BJ (cell line): ENCODE measurements at regions of chr6 and their contacts with region 1.

Region 1: DNA sequence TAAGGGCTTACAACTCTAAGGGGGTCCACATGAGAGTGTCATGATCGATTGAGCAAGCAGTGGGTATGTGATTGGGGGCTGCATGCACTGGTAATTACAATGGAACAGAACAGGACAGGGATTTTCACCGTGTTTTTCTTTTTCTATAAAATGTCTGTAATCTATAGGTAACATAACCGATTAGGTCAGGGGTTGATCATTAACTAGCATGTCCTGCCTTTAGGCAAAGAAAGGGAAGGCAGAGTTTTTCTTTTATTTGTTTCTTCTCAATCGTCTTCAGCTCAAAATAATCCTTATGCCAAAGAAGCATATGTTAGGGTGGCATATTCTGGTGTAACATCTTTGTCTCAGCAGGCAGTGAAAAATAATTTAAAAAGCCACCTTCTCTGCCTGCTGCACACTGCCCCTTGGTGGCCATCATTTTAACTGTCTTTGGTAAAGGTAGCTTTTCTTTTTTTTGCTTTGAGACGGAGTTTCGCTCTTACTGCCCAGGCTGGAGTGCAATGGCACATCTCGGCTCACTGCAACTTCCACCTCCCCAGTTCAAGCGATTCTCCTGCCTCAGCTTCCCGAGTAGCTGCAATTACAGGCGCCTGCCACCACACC is 9.7 kb upstream of the CEP43 start:
- DNase-seq: no peak
- H3K4me3 ChIP-seq: no peak overlapping the region
- H3K27me3 ChIP-seq: no peaks in the 10 kb centered on the region
- CTCF ChIP-seq: peak; percentile 60

Region 2: GRCh38 chr6:166775180-166776081 is 214.1 kb before region 1 on chr6:
- CTCF ChIA-PET with region 1: interaction called, 60 read pairs
- POLR2A ChIA-PET with region 1: no interaction called
- DNase-seq: no peak
- H3K4me3 ChIP-seq: no peak overlapping the region
- H3K27me3 ChIP-seq: no peaks in the 10 kb centered on the region; the same call in 1 of the 2 replicates
- CTCF ChIP-seq: peak; percentile 95

Region 3: DNA sequence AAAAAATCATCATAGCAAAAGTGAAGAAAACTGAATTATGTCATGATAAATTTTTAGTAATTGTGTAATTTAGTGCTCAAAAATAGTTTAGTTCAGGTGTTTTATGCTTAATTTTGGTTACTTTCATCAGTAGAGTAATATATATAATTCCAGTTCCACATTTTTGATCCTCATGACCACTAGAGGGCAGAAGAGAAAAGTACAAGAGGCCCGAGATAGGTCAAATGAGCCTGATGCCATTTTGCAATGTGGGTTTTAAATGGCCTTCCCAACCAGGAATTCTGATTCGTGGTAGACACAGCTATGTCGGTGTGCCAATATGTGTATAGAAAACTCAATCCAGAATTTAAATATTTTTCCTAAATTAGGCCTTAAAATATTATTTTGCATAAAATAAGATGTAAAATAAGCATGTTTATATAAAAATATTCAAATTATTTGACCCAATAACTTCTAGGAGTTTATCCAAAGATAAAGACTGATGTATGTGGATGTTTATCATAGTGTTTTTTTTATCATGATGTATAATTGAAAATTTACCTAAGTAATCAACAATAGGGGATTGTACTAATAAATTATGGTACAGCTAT is 202.7 kb before region 1 on chr6:
- CTCF ChIA-PET with region 1: interaction called, 50 read pairs
- POLR2A ChIA-PET with region 1: no interaction called
- DNase-seq: peak; percentile 9
- H3K4me3 ChIP-seq: no peak overlapping the region
- H3K27me3 ChIP-seq: no peaks in the 10 kb centered on the region
- CTCF ChIP-seq: peak; percentile 61

Region 4: GRCh38 chr6:166798652-166799051 is 190.9 kb before region 1 on chr6:
- CTCF ChIA-PET with region 1: interaction called, 12 read pairs
- POLR2A ChIA-PET with region 1: no interaction called
- DNase-seq: no peak
- H3K4me3 ChIP-seq: no peak overlapping the region
- H3K27me3 ChIP-seq: no peaks in the 10 kb centered on the region
- CTCF ChIP-seq: no peak

Region 5: GRCh38 chr6:166950443-166950821 is 39.1 kb before region 1 on chr6:
- CTCF ChIA-PET with region 1: interaction called, 14 read pairs
- POLR2A ChIA-PET with region 1: no interaction called
- DNase-seq: no peak
- H3K4me3 ChIP-seq: no peak overlapping the region
- H3K27me3 ChIP-seq: no peaks in the 10 kb centered on the region
- CTCF ChIP-seq: no peak

Region 6: GRCh38 chr6:166956444-166957086 is 33.0 kb before region 1 on chr6 and contains the start of gene RNASET2:
- CTCF ChIA-PET with region 1: interaction called, 18 read pairs
- POLR2A ChIA-PET with region 1: no interaction called
- DNase-seq: peak; percentile 31
- H3K4me3 ChIP-seq: peak within 1 kb of the TSS; percentile 84
- H3K27me3 ChIP-seq: no peaks in the 10 kb centered on the region
- CTCF ChIP-seq: no peak
- polyA plus RNA-seq, gene RNASET2: 24.7 and 28.4 TPM in 2 replicates

Region 7: GRCh38 chr6:167077241-167077932 is 87.9 kb after region 1 on chr6:
- CTCF ChIA-PET with region 1: no interaction called
- POLR2A ChIA-PET with region 1: no interaction called
- DNase-seq: no peak
- H3K4me3 ChIP-seq: no peak overlapping the region
- H3K27me3 ChIP-seq: no peaks in the 10 kb centered on the region
- CTCF ChIP-seq: no peak